ENCODE measurements at regions of chr13 and their contacts with region 1.

Region 1: GRCh38 chr13:96020155-96020575 is 33.0 kb downstream of the UGGT2 start:
- DNase-seq: no peak
- ATAC-seq: peak; percentile 28
- H3K4me3 Mint-ChIP-seq: no peak overlapping the region
- H3K27ac Mint-ChIP-seq: no peak overlapping the region
- H3K4me1 Mint-ChIP-seq: no peaks in the 10 kb centered on the region
- H3K27me3 Mint-ChIP-seq: no peaks in the 10 kb centered on the region
- CTCF ChIP-seq: no peak

Region 2: DNA sequence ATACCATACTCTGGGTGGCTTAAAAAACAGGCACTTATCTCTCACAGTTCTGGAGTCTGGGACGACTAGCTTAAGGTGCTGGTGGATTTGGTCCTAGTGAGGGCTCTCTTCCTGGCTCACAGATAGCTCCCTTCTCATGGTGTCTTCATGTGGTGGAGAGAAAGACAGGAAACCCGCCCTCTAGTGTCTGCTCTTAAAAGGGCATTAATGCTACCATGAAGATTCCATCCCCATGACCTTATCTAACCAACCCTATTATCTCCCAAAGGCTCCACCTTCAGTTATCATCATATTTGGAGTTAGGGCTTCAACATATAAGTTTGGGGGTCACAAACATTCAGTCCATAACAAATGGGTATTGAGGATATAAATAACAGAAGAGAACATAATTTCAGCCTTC is 209.2 kb after region 1 on chr13:
- CTCF ChIA-PET with region 1: interaction called, 3 read pairs
- POLR2A ChIA-PET with region 1: no interaction called
- intact Hi-C with region 1: loop called (anchors 1 kb)
- DNase-seq: no peak
- ATAC-seq: no peak
- H3K4me3 Mint-ChIP-seq: no peak overlapping the region
- H3K27ac Mint-ChIP-seq: no peak overlapping the region
- H3K4me1 Mint-ChIP-seq: no peaks in the 10 kb centered on the region
- H3K27me3 Mint-ChIP-seq: no peaks in the 10 kb centered on the region
- CTCF ChIP-seq: no peak

Region 3: GRCh38 chr13:96958286-96958891 is 938.2 kb after region 1 on chr13:
- CTCF ChIA-PET with region 1: interaction called, 14 read pairs
- POLR2A ChIA-PET with region 1: no interaction called
- intact Hi-C with region 1: no loop called
- DNase-seq: no peak
- ATAC-seq: no peak
- H3K4me3 Mint-ChIP-seq: no peak overlapping the region
- H3K27ac Mint-ChIP-seq: no peak overlapping the region
- H3K4me1 Mint-ChIP-seq: no peaks in the 10 kb centered on the region
- H3K27me3 Mint-ChIP-seq: no peaks in the 10 kb centered on the region
- CTCF ChIP-seq: no peak

Region 4: DNA sequence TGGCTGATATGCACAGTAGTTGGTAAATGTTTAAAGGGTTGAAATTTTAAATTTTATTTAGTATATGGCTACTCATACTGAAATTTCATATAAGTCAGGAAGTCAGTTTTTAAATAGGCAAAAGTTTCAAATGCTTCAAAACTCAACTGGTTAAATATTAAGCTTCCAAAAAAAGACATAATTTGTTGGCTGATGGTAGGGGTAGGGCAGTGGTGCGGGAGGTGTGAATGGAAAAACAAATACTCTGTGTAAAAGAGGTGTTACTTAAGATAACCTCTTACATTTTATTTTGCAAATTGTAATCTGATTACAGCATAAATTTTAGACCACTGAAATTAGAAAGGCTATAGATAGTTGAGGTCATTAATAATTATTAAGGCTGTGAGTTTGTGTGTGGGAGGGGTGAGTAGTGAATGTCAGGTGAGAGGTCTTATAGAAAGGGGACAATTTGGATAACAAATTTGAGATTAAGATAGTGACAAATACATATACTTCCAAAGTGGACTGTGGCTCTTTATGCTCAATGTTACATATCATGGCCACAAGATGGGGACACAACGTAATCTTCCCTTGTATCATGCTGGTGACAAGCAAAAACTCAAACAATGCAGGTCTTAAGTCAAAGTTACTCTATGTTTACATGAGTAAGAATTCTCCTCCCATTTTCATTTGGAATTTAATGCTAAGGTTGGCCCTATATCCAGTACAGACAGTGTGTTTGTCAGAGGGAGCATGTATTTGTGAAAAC is 1010.7 kb after region 1 on chr13:
- CTCF ChIA-PET with region 1: interaction called, 3 read pairs
- POLR2A ChIA-PET with region 1: no interaction called
- intact Hi-C with region 1: loop called (anchors 2 kb)
- DNase-seq: no peak
- ATAC-seq: no peak
- H3K4me3 Mint-ChIP-seq: no peak overlapping the region
- H3K27ac Mint-ChIP-seq: no peak overlapping the region
- H3K4me1 Mint-ChIP-seq: no peaks in the 10 kb centered on the region
- H3K27me3 Mint-ChIP-seq: peaks cover 6% of the 10 kb centered on the region
- CTCF ChIP-seq: no peak

Measured in activated B cell treated with CpG ODN at 0.5 μM for 24 hours (primary cell).